BJ (cell line): ENCODE measurements at regions of chr20 and their contacts with region 1.

Region 1: DNA sequence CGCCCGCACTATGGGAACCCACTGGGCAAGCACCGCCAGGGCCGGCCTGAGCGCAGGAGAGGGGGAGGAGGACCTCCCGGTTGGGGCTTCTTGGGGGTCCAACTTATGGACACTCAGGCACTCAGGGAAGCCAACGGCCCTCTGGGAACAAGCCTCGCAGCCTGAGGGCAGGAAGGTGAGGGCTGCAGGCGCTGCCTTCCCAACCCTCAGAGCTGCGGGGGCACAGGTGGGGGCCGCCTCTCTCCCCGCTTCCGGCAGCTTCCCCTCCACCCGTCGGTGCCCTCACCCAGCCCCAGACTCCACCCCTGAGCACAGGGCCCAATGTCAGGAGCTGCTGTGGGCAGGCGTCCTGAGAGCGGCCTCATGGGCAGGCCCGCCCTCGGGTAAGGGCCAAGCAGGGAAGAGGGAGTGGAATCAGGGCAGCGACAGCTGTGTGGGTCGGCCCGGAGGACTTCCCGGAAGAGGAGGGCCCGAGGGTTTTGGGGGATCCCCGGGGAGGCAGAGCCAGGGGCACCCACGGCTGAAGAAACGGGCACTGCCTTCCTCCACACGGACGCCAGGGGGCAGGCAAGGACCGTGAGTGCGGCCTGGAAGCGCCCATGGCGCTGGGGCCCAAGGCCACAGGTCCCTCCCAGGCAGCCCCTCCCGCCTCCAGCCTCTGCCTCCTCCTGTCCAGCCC is 488 bp upstream of the PTK6 start:
- DNase-seq: peak; percentile 47
- H3K4me3 ChIP-seq: peak overlapping the region; percentile 30
- H3K27me3 ChIP-seq: no peaks in the 10 kb centered on the region
- CTCF ChIP-seq: peak; percentile 95

Region 2: DNA sequence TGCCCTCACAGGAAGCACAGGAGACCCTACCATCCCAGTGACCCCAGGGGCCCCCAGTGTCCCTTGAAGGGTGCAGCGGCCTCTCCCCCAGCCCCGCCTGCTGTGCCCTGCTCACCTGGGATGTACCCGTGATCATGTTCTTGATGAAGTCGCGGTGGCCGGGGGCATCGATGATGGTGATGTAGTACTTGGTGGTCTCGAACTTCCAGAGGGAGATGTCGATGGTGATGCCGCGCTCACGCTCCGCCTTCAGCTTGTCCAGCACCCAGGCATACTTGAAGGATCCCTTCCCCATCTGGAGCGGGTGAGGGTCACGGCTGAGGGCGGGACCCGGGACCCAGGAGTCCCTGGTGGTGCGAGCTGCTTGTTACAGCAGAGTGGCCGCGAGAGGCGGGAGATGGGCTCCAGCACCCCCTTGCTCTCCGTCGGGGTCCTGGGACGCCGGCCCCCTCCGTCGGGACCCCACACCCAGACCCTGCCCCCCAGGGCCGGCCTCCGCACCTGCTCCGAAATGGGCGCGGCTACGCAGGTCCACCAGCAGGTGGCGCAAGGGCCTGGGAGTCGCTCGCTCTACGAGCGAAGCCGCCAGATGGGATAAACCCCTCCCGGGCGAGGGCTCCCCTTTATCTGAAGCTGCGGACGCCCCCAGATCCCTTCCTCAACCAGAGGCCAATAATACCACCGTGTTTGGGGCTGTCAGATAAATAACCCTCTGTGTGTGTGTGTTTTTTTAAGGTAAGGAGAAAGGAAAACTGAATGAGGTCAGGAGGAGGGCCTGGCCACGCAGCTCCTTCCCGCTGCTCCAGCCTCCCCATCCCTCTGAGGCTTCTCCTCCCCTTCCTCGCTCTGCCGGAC is 41.7 kb before region 1 on chr20:
- CTCF ChIA-PET with region 1: interaction called, 13 read pairs
- POLR2A ChIA-PET with region 1: no interaction called
- DNase-seq: no peak
- H3K4me3 ChIP-seq: no peak overlapping the region
- H3K27me3 ChIP-seq: peaks cover 3% of the 10 kb centered on the region
- CTCF ChIP-seq: peak; percentile 95

Region 3: DNA sequence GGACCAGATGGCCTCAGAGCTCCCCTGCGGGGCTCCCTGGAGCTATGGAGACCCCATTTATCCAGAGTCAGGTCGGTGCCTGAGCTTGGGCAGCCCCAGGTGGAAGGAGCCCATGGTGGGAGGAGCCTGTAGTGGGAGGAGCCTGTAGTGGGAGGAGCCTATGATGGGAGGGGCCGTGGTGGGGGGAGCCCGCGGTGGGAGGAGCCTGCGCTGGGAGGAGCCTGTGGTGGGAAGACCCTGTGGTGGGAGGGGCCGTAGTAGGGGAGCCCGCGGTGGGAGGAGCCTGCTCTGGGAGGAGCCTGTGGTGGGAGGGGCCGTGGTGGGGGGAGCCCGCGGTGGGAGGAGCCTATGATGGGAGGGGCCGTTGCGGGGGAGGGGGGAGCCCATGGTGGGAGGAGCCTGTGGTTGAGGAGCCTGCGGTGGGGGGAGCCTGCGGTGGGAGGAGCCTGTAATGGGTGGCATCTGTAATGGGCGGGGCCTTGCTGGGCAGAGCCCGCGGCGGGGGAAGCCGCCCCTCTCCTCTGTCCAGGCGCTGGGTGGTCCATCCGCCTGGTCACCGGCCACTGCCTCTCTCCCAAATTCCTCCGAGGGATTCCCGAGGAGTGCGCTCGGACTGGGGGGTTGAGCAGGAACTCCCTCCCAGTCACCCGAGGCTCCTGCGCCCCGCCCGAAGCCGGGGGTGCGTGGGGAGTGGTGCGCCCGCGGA is 15.7 kb after region 1 on chr20:
- CTCF ChIA-PET with region 1: interaction called, 16 read pairs
- POLR2A ChIA-PET with region 1: no interaction called
- DNase-seq: no peak
- H3K4me3 ChIP-seq: peak overlapping the region; percentile 72
- H3K27me3 ChIP-seq: peaks cover 2% of the 10 kb centered on the region
- CTCF ChIP-seq: no peak

Region 4: GRCh38 chr20:63864847-63865640 is 327.4 kb after region 1 on chr20 and contains the start of gene TPD52L2:
- CTCF ChIA-PET with region 1: interaction called, 11 read pairs
- POLR2A ChIA-PET with region 1: interaction called, 3 read pairs
- DNase-seq: peak; percentile 87
- H3K4me3 ChIP-seq: peak within 1 kb of the TSS; percentile 85
- H3K27me3 ChIP-seq: no peaks in the 10 kb centered on the region
- CTCF ChIP-seq: no peak
- polyA plus RNA-seq, gene TPD52L2: 243 and 288 TPM in 2 replicates

Region 5: DNA sequence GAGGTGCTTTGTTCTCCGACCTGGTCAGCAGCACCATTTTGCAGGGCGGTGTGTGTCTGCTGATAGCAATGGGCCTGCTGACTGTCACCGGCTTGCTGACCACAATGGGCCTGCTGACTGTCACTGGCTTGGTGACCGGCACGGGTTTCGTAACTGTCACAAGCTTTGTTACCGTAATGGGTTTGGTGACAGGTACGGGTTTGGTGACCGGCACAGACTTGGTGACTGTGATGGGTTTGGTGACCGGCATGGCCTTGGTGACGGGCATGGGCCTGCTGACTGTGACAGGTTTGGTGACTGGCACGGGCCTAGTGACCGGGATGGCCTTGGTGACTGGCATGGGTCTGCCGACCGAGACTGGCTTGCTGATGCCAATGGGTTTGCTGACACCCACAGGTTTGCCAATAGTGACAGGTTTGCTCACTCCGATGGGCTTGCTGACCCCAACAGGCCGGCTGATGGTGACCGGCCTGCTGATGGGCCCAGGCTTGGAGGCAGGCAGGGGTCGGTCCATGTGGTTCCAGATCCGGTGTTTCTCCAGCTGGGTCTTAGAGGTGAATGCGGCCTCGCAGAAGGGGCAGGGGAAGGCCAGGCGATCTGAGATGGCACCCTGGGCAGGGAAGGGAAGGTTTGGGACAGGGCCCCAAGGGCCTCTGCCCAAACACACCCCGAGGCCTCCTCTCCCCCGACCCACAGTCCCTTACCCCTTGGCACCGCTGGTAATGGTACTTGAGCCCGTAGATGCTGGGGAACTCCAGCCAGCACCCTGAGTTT is 428.7 kb after region 1 on chr20:
- CTCF ChIA-PET with region 1: no interaction called
- POLR2A ChIA-PET with region 1: no interaction called
- DNase-seq: no peak
- H3K4me3 ChIP-seq: no peak overlapping the region
- H3K27me3 ChIP-seq: no peaks in the 10 kb centered on the region
- CTCF ChIP-seq: no peak

Region 6: GRCh38 chr20:63980806-63981728 is 443.4 kb after region 1 on chr20 and contains the start of gene PRPF6:
- CTCF ChIA-PET with region 1: interaction called, 53 read pairs
- POLR2A ChIA-PET with region 1: no interaction called
- DNase-seq: peak; percentile 60
- H3K4me3 ChIP-seq: peak within 1 kb of the TSS; percentile 97
- H3K27me3 ChIP-seq: no peaks in the 10 kb centered on the region
- CTCF ChIP-seq: peak; percentile 99
- polyA plus RNA-seq, gene PRPF6: 37.9 and 52.3 TPM in 2 replicates

Region 7: GRCh38 chr20:64119681-64120341 is 582.1 kb after region 1 on chr20:
- CTCF ChIA-PET with region 1: interaction called, 17 read pairs
- POLR2A ChIA-PET with region 1: no interaction called
- DNase-seq: no peak
- H3K4me3 ChIP-seq: no peak overlapping the region
- H3K27me3 ChIP-seq: peaks cover 4% of the 10 kb centered on the region; the same call in 1 of the 2 replicates
- CTCF ChIP-seq: no peak